ENCODE measurements at regions of chr4 and their contacts with region 1.

Region 1: GRCh38 chr4:121869841-121870656 is at the start of gene BBS7:
- DNase-seq: peak; percentile 96
- ATAC-seq: peak; percentile 99
- H3K4me3 Mint-ChIP-seq: peak within 1 kb of the TSS; percentile 97
- H3K27ac Mint-ChIP-seq: peak within 1 kb of the TSS; percentile 66
- H3K4me1 Mint-ChIP-seq: peaks cover 15% of the 10 kb centered on the region
- H3K27me3 Mint-ChIP-seq: peaks cover 8% of the 10 kb centered on the region
- CTCF ChIP-seq: no peak
- total RNA-seq, gene BBS7: 7.5 and 9.4 TPM in 2 replicates

Region 2: DNA sequence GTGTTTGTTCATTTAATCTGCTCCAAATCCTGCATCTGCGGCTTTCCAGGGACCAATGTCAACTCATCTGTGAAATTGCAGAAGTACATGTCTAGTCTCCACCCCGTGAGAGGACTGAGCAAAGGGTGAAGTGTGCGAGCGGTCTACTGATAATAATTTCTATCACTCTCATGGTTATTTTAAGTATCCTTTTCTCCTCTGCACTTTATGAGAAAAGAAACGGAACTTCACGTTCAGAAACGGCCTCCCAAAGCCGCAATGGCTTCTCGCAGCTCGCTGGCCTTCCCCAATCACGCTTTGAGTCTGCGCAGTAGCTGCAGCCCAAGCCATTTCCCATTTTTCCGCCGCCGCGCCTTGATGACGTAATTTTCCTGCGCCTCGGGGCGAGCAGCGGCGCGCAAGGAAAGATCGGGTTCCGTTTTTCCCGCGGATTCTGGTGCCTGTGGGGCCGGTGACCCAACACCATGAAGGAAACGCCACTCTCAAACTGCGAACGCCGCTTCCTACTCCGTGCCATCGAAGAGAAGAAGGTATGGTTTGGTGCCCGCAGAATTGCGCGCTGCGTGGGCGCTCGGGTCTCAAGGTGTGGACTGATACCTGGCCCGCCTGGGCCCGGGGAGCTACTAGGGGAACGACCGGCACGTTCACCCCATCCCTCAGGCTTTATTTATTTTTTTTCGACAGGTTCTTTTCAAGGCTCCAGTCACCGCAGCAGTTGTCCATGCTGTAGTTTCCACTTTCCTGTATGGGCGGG is 68.9 kb before region 1 on chr4 and contains the start of gene EXOSC9:
- CTCF ChIA-PET with region 1: no interaction called
- POLR2A ChIA-PET with region 1: interaction called, 6 read pairs
- intact Hi-C with region 1: loop called (anchors 1 kb)
- DNase-seq: peak; percentile 94
- ATAC-seq: peak; percentile 81
- H3K4me3 Mint-ChIP-seq: peak within 1 kb of the TSS; percentile 96
- H3K27ac Mint-ChIP-seq: peak within 1 kb of the TSS; percentile 100
- H3K4me1 Mint-ChIP-seq: peaks cover 31% of the 10 kb centered on the region
- H3K27me3 Mint-ChIP-seq: no peaks in the 10 kb centered on the region
- CTCF ChIP-seq: no peak
- total RNA-seq, gene EXOSC9: 37.5 and 39.1 TPM in 2 replicates

Region 3: DNA sequence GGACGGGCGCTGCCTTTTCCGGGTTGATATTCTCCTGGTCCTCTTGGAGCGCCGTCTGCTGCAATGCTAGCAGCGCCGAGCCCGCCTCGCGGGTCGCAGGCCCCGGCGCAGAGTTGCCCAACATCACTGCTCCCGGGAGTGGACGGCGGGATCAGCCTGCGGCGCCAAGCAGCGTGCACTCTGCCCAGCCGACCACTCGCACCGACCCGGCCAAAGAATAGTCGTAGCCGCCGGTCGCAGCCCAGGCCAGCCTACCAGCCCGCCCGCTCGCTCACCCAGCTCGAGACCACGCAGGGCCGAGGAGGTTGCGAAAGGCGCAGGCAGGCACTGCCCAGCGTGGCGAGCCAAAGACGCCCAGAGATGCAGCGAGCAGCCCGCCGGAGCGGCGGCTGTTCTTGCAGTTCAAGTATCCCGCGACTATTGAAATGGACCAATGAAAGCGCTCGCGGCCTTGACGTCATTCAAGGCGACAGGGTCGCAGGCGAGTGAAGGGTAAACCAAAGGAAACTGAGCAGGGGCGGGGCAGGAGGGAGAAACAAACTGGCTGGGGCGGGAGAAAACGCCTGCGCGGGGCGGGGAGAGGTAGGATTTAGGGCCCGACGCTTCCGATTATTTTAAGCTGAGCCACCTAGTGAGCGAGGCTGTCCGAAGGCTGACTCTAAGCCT is 46.4 kb before region 1 on chr4 and contains the start of gene CCNA2:
- CTCF ChIA-PET with region 1: no interaction called
- POLR2A ChIA-PET with region 1: interaction called, 9 read pairs
- intact Hi-C with region 1: loop called (anchors 1 kb)
- DNase-seq: peak; percentile 86
- ATAC-seq: peak; percentile 99
- H3K4me3 Mint-ChIP-seq: peak within 1 kb of the TSS; percentile 87
- H3K27ac Mint-ChIP-seq: peak within 1 kb of the TSS; percentile 82
- H3K4me1 Mint-ChIP-seq: peaks cover 17% of the 10 kb centered on the region
- H3K27me3 Mint-ChIP-seq: no peaks in the 10 kb centered on the region
- CTCF ChIP-seq: no peak
- total RNA-seq, gene CCNA2: 1.4 and 2.0 TPM in 2 replicates

Region 4: GRCh38 chr4:121881158-121881557 is 11.1 kb after region 1 on chr4:
- CTCF ChIA-PET with region 1: no interaction called
- POLR2A ChIA-PET with region 1: no interaction called
- intact Hi-C with region 1: no loop called
- DNase-seq: no peak
- ATAC-seq: no peak
- H3K4me3 Mint-ChIP-seq: no peak overlapping the region
- H3K27ac Mint-ChIP-seq: no peak overlapping the region
- H3K4me1 Mint-ChIP-seq: no peaks in the 10 kb centered on the region
- H3K27me3 Mint-ChIP-seq: peaks cover 30% of the 10 kb centered on the region
- CTCF ChIP-seq: no peak

Region 5: GRCh38 chr4:122151982-122152710 is 282.1 kb after region 1 on chr4 and contains the start of gene BLTP1:
- CTCF ChIA-PET with region 1: no interaction called
- POLR2A ChIA-PET with region 1: no interaction called
- intact Hi-C with region 1: loop called (anchors 1 kb)
- DNase-seq: peak; percentile 85
- ATAC-seq: peak; percentile 95
- H3K4me3 Mint-ChIP-seq: peak within 1 kb of the TSS; percentile 97
- H3K27ac Mint-ChIP-seq: peak within 1 kb of the TSS; percentile 97
- H3K4me1 Mint-ChIP-seq: peaks cover 39% of the 10 kb centered on the region
- H3K27me3 Mint-ChIP-seq: no peaks in the 10 kb centered on the region
- CTCF ChIP-seq: no peak
- total RNA-seq, gene BLTP1: 39.1 and 44.4 TPM in 2 replicates